Left colon (tissue), 2 donors: ENCODE measurements at regions of chr16 and their contacts with region 1.

Region 1: DNA sequence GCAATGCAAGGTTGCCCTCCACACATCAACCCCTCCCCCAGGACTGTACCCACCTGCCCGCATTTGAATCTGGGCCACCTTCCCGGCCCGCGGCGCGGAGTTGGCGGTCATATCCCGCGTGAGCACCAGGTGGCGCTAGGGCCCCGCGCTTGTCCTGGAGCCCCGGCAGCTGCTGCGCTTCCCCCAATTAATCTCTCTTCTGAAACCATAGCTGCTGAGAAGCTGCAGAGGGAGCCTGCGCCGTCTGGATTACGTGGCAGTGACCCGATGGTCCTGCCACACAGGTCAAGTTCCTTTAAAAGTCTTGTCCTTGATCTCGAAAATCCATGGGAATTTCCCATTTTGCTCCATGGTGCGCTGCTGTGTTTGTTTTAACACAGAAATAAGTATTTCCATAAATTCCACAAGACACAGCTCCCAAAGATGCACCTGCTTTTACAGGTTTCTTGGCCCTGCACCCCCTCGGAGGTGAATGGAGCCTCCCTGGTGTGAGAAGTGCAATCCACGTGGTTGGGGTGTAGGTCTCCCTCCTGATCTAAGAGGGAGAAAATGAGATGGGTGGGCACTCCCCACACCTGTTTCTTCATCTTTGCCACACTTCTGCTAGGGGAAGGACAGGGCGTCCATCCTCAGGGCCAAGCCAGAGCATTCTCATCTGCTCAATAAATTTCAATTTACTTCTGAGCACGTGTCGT is 22.1 kb downstream of the COX4I1 start:
- DNase-seq: peak; percentile 78 to 83
- ATAC-seq: peak; percentile 91

Region 2: GRCh38 chr16:85986931-85987749 is 165.6 kb after region 1 on chr16:
- intact Hi-C with region 1: loop called (anchors 10 kb)
- DNase-seq: peak; percentile 61 to 62
- ATAC-seq: peak; percentile 70

Region 3: DNA sequence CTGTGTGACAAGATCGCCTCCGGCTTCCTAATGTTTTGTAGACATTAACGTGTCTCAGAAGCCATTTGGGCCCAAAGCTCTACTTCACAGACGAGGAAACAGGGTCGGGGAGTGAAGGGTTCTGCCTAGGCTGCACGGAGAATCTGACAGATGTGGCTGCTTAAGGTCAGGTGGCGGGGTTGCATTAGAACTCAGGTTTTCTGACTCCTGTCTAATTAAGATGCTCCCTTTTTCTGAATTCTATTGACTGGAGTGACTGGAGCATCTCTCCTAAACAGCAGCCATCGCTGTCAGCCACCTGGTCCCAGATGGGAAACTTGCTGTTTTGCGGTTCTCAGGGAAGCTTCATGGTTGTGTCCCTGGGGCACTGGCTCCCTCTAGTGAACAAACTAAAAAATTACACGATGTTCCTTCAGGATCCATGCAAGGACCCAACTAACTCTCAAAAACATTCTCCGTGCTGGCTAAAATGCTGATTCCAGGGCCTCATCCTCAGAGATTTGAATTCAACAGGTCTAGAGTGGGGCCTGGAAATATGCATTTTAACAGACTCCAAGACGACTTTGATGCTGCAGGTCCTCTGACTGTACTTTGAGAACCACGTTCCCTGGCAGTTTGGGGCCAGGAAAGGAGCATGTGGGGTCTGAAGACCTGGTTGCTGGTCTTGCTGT is 194.7 kb after region 1 on chr16:
- intact Hi-C with region 1: loop called in 1 of 2 experiments (anchors 5 kb)
- DNase-seq: no peak
- ATAC-seq: peak; percentile 86